Activated naive CD4-positive, alpha-beta T cell treated with anti-CD3 and anti-CD28 coated beads, Interleukin-2, amount 10 ng/mL, durations not matched to agents 7 days and 5 days (primary cell): ENCODE measurements at regions of chr1 and their contacts with region 1.

Region 1: GRCh38 chr1:91997607-91998195 is 32.1 kb upstream of the EPHX4 start:
- DNase-seq: peak; percentile 62
- H3K4me3 Mint-ChIP-seq: no peak overlapping the region
- H3K27ac Mint-ChIP-seq: no peak overlapping the region
- H3K4me1 Mint-ChIP-seq: no peaks in the 10 kb centered on the region
- H3K27me3 Mint-ChIP-seq: no peaks in the 10 kb centered on the region

Region 2: DNA sequence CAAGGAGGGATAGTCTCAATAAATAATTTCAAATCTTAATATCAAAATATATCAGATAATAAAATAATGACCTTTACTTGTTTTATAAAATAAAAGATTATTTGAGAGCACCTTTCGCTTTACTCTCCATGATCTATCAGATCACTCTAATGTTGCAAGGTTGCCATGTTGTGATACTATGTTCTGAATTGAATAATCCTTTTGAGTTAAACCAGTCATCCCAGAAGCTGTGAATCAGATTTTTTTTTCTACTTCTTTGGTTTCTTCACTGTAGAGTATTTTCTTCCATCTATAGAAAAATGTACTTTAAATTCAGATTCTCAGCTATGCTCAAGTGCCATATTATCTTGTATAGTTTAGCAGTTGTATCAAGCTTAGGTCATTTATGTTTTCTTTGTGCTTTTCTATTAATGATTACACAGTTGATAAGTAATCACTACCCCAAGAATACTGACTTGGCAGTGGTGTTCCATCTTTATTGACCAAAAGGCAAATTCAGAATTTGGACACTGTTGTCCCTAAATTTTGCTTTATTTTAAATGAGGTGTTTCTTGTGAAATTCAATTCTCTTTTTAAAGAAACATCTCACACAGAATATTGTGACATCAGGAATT is 15.6 kb before region 1 on chr1:
- CTCF ChIA-PET with region 1: interaction called, 10 read pairs
- DNase-seq: no peak
- H3K4me3 Mint-ChIP-seq: no peak overlapping the region
- H3K27ac Mint-ChIP-seq: no peak overlapping the region
- H3K4me1 Mint-ChIP-seq: no peaks in the 10 kb centered on the region
- H3K27me3 Mint-ChIP-seq: peaks cover 11% of the 10 kb centered on the region

Region 3: GRCh38 chr1:92291372-92291999 is 293.8 kb after region 1 on chr1:
- CTCF ChIA-PET with region 1: interaction called, 44 read pairs
- DNase-seq: peak; percentile 23
- H3K4me3 Mint-ChIP-seq: no peak overlapping the region
- H3K27ac Mint-ChIP-seq: no peak overlapping the region
- H3K4me1 Mint-ChIP-seq: peaks cover 18% of the 10 kb centered on the region
- H3K27me3 Mint-ChIP-seq: no peaks in the 10 kb centered on the region

Region 4: GRCh38 chr1:92623187-92623778 is 625.6 kb after region 1 on chr1:
- CTCF ChIA-PET with region 1: interaction called, 10 read pairs
- DNase-seq: no peak
- H3K4me3 Mint-ChIP-seq: no peak overlapping the region
- H3K27ac Mint-ChIP-seq: no peak overlapping the region
- H3K4me1 Mint-ChIP-seq: peaks cover 2% of the 10 kb centered on the region
- H3K27me3 Mint-ChIP-seq: no peaks in the 10 kb centered on the region